ENCODE measurements at regions of chr7 and their contacts with region 1.

Region 1: GRCh38 chr7:101363734-101364374 is 1.2 kb downstream of the COL26A1 start:
- DNase-seq: peak; percentile 90
- H3K4me3 Mint-ChIP-seq: no peak overlapping the region
- H3K27ac Mint-ChIP-seq: no peak overlapping the region
- H3K4me1 Mint-ChIP-seq: peaks cover 5% of the 10 kb centered on the region
- H3K27me3 Mint-ChIP-seq: peaks cover 35% of the 10 kb centered on the region

Region 2: GRCh38 chr7:101410743-101411507 is 47.1 kb after region 1 on chr7:
- intact Hi-C with region 1: loop called (anchors 1 kb)
- DNase-seq: peak; percentile 81
- H3K4me3 Mint-ChIP-seq: no peak overlapping the region
- H3K27ac Mint-ChIP-seq: no peak overlapping the region
- H3K4me1 Mint-ChIP-seq: peaks cover 5% of the 10 kb centered on the region
- H3K27me3 Mint-ChIP-seq: no peaks in the 10 kb centered on the region

Region 3: GRCh38 chr7:101436857-101437576 is 73.2 kb after region 1 on chr7:
- intact Hi-C with region 1: loop called (anchors 1 kb)
- DNase-seq: no peak
- H3K4me3 Mint-ChIP-seq: no peak overlapping the region
- H3K27ac Mint-ChIP-seq: no peak overlapping the region
- H3K4me1 Mint-ChIP-seq: no peaks in the 10 kb centered on the region
- H3K27me3 Mint-ChIP-seq: peaks cover 10% of the 10 kb centered on the region

Region 4: GRCh38 chr7:101507791-101508252 is 144.0 kb after region 1 on chr7:
- intact Hi-C with region 1: loop called (anchors 1 kb)
- DNase-seq: peak; percentile 86
- H3K4me3 Mint-ChIP-seq: peak overlapping the region; percentile 58
- H3K27ac Mint-ChIP-seq: no peak overlapping the region
- H3K4me1 Mint-ChIP-seq: peaks cover 19% of the 10 kb centered on the region
- H3K27me3 Mint-ChIP-seq: peaks cover 7% of the 10 kb centered on the region